Posterior vena cava (tissue), 2 donors: ENCODE measurements at regions of chr14 and their contacts with region 1.

Region 1: DNA sequence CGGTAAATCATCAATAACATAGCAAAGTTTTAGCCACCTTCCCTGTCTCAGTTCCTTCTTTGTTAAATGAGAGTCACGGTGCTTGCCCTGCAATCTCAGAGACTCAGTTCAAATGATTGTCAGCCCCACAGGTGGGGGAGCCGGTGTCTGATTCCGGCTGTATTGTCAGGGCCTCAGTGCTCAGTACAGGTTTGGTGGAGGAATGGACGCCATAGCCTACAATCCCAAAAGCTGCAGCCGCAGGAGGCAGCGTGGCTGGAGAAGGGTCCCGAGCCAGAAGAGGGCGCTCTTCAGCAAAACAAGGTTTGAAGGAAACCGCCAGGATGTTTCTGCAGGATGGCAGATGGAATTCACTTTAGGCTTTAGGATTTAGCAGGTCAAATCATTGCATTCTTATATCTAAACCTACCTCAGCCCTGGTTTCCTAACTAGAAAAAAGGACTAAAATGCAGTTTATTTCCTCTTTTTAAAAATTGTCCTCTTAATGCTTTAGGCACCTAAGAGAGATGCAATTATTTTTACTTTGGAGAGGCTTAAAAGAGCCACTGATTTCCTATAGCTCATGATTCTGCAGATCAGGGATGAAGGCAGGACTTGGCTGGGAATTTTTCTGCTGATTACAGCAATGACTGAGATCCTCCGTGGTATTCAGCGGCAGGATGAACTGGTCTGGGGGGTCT is 29.2 kb downstream of the FOS start:
- DNase-seq: peak; percentile 96

Region 2: GRCh38 chr14:75132382-75133086 is 175.3 kb before region 1 on chr14:
- intact Hi-C with region 1: loop called in 1 of 2 experiments (anchors 2 kb)
- DNase-seq: no peak

Region 3: DNA sequence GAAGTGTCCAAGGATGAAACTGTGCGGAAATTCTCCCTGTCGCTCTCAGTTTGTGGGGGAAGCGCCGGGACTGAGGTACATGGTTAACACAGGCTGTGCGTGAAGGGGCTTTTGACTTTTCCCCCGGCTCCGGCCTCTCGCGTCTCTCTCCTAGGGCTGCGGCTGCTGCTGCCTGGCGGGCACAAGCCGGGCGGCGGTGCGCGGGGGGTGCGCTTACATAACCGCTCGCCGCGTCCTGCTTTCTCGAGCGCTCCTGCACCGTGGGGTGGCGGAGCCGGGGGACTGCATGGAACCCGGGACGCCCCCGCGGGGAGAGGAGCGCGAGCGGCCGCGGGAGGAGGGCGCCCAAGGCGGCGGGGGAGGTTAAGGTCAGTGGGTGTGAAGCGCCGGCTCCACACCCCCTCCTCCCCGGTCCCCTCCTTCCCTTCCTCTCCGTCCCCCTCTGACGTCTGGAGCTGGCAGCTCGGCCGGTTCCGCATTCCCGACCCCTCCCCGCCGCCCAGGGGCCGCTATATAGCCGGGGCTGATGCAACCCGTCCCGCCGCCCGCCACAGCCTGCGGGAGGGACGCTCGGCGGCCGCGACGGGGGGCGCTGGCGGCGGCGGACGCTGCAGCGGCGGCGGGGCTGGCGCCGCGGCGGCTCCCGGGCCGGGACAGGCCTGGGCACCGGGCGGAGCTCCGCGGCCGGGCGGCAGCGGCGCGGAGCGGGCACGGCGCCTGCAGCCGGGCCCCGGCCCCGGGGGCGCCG is 119.8 kb after region 1 on chr14 and contains the start of gene JDP2:
- intact Hi-C with region 1: no loop called
- DNase-seq: peak; percentile 99
- total RNA-seq, gene JDP2: 44.2 to 54.8 TPM

Region 4: DNA sequence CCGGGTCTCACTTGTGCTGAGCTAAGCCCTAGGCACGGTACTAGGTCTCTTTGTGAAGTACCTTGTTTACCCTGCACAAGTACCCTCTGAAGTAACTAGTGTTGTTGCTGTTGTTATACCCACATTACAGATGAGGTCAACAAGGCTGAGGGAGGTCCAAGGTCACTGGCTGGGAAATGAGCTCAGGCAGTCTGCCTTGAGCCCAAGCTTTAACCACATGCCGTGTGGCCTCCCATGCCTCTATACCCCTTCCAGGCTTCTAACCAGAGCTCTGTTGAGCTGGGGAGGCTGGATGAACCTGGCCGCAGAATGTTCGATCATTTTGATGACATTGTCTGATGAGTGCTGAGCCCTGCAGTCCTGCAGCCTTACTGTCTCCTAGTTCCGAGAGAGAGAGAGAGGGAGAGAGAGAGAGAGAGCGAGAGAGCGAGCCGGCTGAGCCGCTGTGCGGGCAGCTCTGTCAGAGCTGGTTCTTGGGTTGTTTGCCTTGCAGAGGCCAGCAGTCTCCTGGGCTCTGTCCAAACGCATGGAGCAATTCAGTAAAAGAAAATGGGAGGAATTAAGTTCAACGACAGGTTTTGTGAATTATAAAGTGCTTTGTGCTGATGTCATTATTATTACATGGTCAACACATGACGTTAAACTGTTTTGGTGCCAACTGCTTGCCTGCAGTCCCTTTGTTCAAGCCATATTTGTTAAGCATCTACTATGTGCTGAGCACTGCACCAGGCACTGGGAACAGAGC is 133.1 kb after region 1 on chr14:
- intact Hi-C with region 1: no loop called
- DNase-seq: peak; percentile 91

Region 5: GRCh38 chr14:75476274-75476995 is 168.6 kb after region 1 on chr14:
- intact Hi-C with region 1: no loop called
- DNase-seq: no peak

Region 6: DNA sequence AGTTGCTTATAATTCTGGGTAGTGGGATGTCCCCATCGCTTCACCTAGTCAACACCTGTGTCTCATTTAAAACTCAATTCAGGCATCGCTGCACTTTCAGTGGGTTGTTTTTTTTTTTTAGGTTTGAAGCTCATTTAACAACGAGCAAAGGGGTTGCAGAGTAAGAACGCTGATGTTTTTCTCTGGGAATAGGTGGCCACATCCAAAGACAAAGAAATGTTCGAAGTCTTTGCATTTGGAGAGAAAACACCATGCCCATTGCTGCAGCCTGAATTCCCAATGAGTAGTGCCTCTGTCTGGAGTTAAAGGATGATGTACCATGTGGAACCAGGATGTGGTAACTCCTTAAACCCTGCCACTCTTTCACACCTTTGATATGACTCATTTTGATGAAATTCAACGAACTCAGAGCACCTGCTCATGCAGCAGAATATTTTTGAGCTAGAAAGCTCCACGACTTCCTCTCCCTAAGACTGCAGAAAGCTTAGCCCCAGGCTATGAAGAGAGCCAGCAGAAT is 179.4 kb after region 1 on chr14:
- intact Hi-C with region 1: loop called (anchors 2 to 5 kb)
- DNase-seq: no peak